AG04450 (cell line): ENCODE measurements at regions of chr17 and their contacts with region 1.

Region 1: GRCh38 chr17:42248351-42249179 is 27.6 kb downstream of the STAT5B start:
- DNase-seq: peak; percentile 78
- H3K4me3 ChIP-seq: peak overlapping the region; percentile 52
- H3K27ac ChIP-seq: peak overlapping the region; percentile 74
- H3K27me3 ChIP-seq: no peaks in the 10 kb centered on the region
- CTCF ChIP-seq: no peak

Region 2: DNA sequence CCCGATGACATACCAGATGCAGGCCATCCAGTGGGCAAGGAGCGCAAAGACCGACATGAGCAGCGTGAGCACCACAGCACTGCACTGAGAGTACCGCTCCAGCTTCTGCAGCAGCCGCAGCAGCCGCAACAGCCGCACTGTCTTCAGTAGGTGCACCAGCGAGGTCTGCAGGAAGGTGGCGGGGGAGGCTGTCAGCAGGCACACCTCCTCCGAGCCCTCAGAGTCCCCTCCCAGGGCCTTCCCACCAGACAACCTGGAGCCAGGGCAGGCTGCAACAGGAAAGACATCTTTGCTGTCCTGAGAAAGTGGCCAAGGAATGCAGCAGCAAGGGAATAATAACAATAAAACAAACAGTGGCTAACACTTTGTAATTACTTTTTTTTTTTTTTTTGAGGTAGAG is 76.7 kb before region 1 on chr17:
- CTCF ChIA-PET with region 1: interaction called, 12 read pairs
- POLR2A ChIA-PET with region 1: no interaction called
- DNase-seq: no peak
- H3K4me3 ChIP-seq: no peak overlapping the region
- H3K27ac ChIP-seq: no peak overlapping the region
- H3K27me3 ChIP-seq: peaks cover 28% of the 10 kb centered on the region
- CTCF ChIP-seq: no peak

Region 3: GRCh38 chr17:42193969-42194899 is 54.3 kb before region 1 on chr17 and contains the start of gene GHDC:
- CTCF ChIA-PET with region 1: no interaction called
- POLR2A ChIA-PET with region 1: no interaction called
- DNase-seq: peak; percentile 30
- H3K4me3 ChIP-seq: peak within 1 kb of the TSS; percentile 80
- H3K27ac ChIP-seq: no peak within 1 kb of the TSS
- H3K27me3 ChIP-seq: no peaks in the 10 kb centered on the region
- CTCF ChIP-seq: no peak
- polyA plus RNA-seq, gene GHDC: 5.1 and 7.0 TPM in 2 replicates

Region 4: DNA sequence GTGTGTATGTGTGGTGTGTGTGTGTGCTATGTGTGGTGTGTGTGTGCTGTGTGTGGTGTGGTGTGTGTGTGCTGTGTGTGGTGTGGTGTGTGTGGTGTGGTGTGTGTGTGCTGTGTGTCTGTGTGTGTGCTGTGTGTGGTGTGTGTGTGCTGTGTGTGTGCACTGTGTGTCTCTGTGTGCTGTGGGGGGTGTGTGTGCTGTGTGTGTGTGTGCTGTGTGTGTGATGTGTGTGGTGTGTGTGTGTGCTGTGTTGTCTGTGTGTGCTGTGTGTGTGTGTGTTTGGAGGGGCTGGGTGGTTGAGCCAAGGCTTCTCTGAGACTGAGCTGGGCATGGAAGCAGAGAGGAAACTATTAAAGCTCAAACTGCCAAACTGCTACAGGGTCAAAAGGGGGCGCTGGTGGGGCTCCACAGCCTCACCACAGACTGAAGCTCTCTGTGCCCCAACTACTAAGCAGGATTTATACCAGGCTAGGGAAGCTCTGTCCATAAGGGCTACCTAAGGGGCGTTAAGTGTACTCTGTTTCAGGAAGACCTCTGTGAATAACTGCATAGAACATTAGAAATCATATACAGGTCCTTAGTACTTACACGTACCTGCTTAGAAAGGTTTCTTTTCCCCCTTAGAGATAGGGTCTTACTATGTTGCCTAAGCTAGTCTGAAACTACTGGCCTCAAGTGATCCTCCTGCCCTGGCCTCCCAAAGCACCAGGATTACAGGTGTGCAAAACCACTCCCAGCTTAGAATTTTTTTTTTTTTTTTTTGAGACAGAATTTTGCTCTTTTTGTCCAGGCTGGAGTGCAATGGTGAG is 26.4 kb before region 1 on chr17:
- CTCF ChIA-PET with region 1: interaction called, 14 read pairs
- POLR2A ChIA-PET with region 1: interaction called, 3 read pairs
- DNase-seq: peak; percentile 13
- H3K4me3 ChIP-seq: no peak overlapping the region
- H3K27ac ChIP-seq: no peak overlapping the region
- H3K27me3 ChIP-seq: no peaks in the 10 kb centered on the region
- CTCF ChIP-seq: peak; percentile 80

Region 5: DNA sequence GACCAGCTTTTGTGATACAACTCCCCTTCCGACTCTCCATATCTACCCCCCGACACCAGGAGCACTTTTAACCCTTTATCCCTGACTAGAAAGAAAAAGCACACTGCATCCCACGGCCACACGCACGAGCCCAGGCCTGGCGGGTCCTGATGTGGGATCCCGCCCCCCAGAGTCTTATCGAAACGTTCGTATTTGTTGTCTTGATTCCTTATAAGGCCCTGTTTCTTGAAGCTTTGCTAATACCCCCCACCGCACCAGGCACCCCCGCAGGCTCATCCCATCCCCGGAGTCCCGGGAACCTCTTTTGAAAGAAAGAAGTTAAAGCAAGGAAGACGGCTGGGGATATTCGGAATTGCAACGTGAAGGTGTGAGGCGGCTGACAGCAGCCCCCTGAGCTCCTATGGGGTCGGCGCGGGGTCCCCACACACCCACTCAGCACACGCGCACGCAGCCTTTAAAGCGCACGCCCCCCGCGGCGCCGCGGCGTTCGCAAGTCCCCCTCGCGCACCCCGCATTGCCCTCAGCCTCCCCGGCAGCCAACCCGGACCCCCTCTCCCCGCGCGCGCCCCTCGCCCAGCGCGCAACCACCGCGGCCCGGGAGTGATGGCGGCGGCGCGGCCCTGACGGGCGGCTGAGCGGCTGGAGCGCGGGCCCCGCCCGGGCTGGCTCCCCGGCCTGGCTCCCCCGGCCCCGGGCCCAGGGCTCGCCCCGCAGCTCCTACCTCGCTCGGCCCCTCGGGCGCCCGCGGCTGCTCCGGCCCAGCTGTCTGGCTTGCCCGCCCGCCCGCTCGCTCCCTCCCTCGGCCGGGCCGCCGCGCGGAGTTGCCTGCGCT is 27.2 kb after region 1 on chr17:
- CTCF ChIA-PET with region 1: interaction called, 3 read pairs
- POLR2A ChIA-PET with region 1: interaction called, 10 read pairs
- DNase-seq: peak; percentile 15
- H3K4me3 ChIP-seq: peak overlapping the region; percentile 78
- H3K27ac ChIP-seq: peak overlapping the region; percentile 73
- H3K27me3 ChIP-seq: peaks cover 2% of the 10 kb centered on the region
- CTCF ChIP-seq: no peak